Naive thymus-derived CD4-positive, alpha-beta T cell (primary cell): ENCODE measurements at regions of chr6 and their contacts with region 1.

Region 1: GRCh38 chr6:24720604-24721460 is 1.9 kb upstream of the C6orf62 start:
- DNase-seq: peak; percentile 97 to 100 (median 100)
- ATAC-seq: peak; percentile 90
- H3K4me3 ChIP-seq: peak overlapping the region; percentile 89
- H3K4me3 Mint-ChIP-seq: peak overlapping the region; percentile 93 to 97 (median 96)
- H3K27ac ChIP-seq: peak overlapping the region; percentile 99
- H3K27ac Mint-ChIP-seq: peak overlapping the region; percentile 95 to 100 (median 99)
- H3K4me1 ChIP-seq: peaks cover 35 to 36% of the 10 kb centered on the region in 2 donors
- H3K4me1 Mint-ChIP-seq: peaks cover 27 to 52% (median 47%) of the 10 kb centered on the region in 7 donors
- H3K27me3 ChIP-seq: no peaks in the 10 kb centered on the region
- H3K27me3 Mint-ChIP-seq: peaks cover 0 to 2% (median 0%) of the 10 kb centered on the region in 5 donors

Region 2: GRCh38 chr6:24666641-24667377 is 54.0 kb before region 1 on chr6 and contains the starts of genes ACOT13 and TDP2:
- CTCF ChIA-PET with region 1: no interaction called
- POLR2A ChIA-PET with region 1: interaction called, 39 read pairs
- intact Hi-C with region 1: loop called (anchors 1 kb)
- DNase-seq: peak; percentile 93 to 97 (median 96)
- ATAC-seq: peak; percentile 97
- H3K4me3 ChIP-seq: peak within 1 kb of the TSS; percentile 91
- H3K4me3 Mint-ChIP-seq: peak within 1 kb of the TSS; percentile 93 to 100 (median 98)
- H3K27ac ChIP-seq: peak within 1 kb of the TSS; percentile 88
- H3K27ac Mint-ChIP-seq: peak within 1 kb of the TSS; percentile 91 to 99 (median 98)
- H3K4me1 ChIP-seq: peaks cover 19 to 27% of the 10 kb centered on the region in 2 donors
- H3K4me1 Mint-ChIP-seq: peaks cover 28 to 70% (median 68%) of the 10 kb centered on the region in 7 donors
- H3K27me3 ChIP-seq: no peaks in the 10 kb centered on the region
- H3K27me3 Mint-ChIP-seq: no peaks in the 10 kb centered on the region
- total RNA-seq, gene ACOT13: 4.0 to 20.0 (median 12.5) TPM
- total RNA-seq, gene TDP2: 38.6 to 69.7 (median 48.2) TPM

Region 3: GRCh38 chr6:24743265-24743943 is 22.6 kb after region 1 on chr6:
- CTCF ChIA-PET with region 1: interaction called, 4 read pairs
- POLR2A ChIA-PET with region 1: interaction called, 15 read pairs
- intact Hi-C with region 1: loop called in 1 of 2 experiments (anchors 1 kb)
- DNase-seq: peak in 1 of 9 donors; percentile 25
- ATAC-seq: peak; percentile 83
- H3K4me3 ChIP-seq: no peak overlapping the region
- H3K4me3 Mint-ChIP-seq: peak overlapping the region in 1 of 10 donors; percentile 2
- H3K27ac ChIP-seq: no peak overlapping the region
- H3K27ac Mint-ChIP-seq: peak overlapping the region in 1 of 9 donors; percentile 56
- H3K4me1 ChIP-seq: no peaks in the 10 kb centered on the region
- H3K4me1 Mint-ChIP-seq: peaks cover 0 to 16% (median 0%) of the 10 kb centered on the region in 7 donors
- H3K27me3 ChIP-seq: no peaks in the 10 kb centered on the region
- H3K27me3 Mint-ChIP-seq: no peaks in the 10 kb centered on the region

Region 4: GRCh38 chr6:24855395-24856245 is 134.8 kb after region 1 on chr6:
- CTCF ChIA-PET with region 1: no interaction called
- POLR2A ChIA-PET with region 1: interaction called, 3 read pairs
- intact Hi-C with region 1: loop called in 1 of 2 experiments (anchors 5 kb)
- DNase-seq: peak; percentile 25 to 83 (median 74)
- ATAC-seq: peak; percentile 78
- H3K4me3 ChIP-seq: no peak overlapping the region
- H3K4me3 Mint-ChIP-seq: peak overlapping the region in 8 of 10 donors; percentile 48 to 89 (median 62)
- H3K27ac ChIP-seq: peak overlapping the region; percentile 72
- H3K27ac Mint-ChIP-seq: peak overlapping the region; percentile 86 to 99 (median 94)
- H3K4me1 ChIP-seq: peaks cover 47 to 59% of the 10 kb centered on the region in 2 donors
- H3K4me1 Mint-ChIP-seq: peaks cover 51 to 72% (median 66%) of the 10 kb centered on the region in 7 donors
- H3K27me3 ChIP-seq: no peaks in the 10 kb centered on the region
- H3K27me3 Mint-ChIP-seq: no peaks in the 10 kb centered on the region

Region 5: DNA sequence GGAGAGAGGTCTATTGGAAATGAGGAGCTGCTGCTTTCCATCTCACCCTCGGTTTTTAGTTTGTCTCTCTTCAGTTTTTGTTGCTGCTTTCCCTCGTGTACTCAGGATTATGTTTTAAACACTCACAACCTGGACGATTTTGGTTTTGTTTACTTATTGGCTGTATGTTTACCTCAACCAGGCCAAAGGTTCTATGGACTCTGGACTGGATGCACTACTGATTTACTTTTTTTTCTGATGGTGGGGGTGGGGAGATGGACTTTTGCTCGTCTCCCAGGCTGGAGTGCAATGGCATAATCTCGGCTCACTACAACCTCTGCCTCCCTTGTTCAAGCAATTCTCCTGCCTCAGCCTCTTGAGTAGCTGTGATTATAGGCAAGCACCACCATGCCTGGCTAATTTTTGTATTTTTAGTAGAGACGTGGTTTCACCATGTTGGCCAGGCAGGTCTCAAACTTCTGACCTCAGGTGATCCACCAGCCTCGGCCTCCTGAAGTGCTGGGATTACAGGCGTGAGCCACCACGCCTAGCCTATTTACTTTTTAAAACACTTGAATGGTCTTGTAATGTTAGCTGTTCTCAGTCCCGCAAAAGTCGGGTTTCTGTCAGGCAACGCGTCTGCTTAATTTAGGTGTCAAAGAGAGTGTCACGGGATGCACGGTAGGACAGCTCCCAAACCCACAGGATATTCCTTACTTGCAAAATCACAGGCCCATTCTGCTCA is 363.1 kb after region 1 on chr6:
- CTCF ChIA-PET with region 1: no interaction called
- POLR2A ChIA-PET with region 1: no interaction called
- intact Hi-C with region 1: no loop called
- DNase-seq: no peak
- ATAC-seq: no peak
- H3K4me3 ChIP-seq: no peak overlapping the region
- H3K4me3 Mint-ChIP-seq: no peak overlapping the region
- H3K27ac ChIP-seq: no peak overlapping the region
- H3K27ac Mint-ChIP-seq: peak overlapping the region in 4 of 9 donors; percentile 28 to 73 (median 55)
- H3K4me1 ChIP-seq: peaks cover 18 to 22% of the 10 kb centered on the region in 2 donors
- H3K4me1 Mint-ChIP-seq: peaks cover 5 to 15% (median 11%) of the 10 kb centered on the region in 7 donors
- H3K27me3 ChIP-seq: no peaks in the 10 kb centered on the region
- H3K27me3 Mint-ChIP-seq: no peaks in the 10 kb centered on the region

Region 6: GRCh38 chr6:25138237-25139125 is 417.6 kb after region 1 on chr6:
- CTCF ChIA-PET with region 1: no interaction called
- POLR2A ChIA-PET with region 1: interaction called, 8 read pairs
- intact Hi-C with region 1: loop called (anchors 1 to 2 kb)
- DNase-seq: peak; percentile 14 to 67 (median 60)
- ATAC-seq: peak; percentile 94
- H3K4me3 ChIP-seq: peak overlapping the region; percentile 61
- H3K4me3 Mint-ChIP-seq: peak overlapping the region; percentile 84 to 98 (median 92)
- H3K27ac ChIP-seq: peak overlapping the region; percentile 76
- H3K27ac Mint-ChIP-seq: peak overlapping the region; percentile 87 to 97 (median 96)
- H3K4me1 ChIP-seq: peaks cover 12 to 16% of the 10 kb centered on the region in 2 donors
- H3K4me1 Mint-ChIP-seq: peaks cover 22 to 45% (median 27%) of the 10 kb centered on the region in 7 donors
- H3K27me3 ChIP-seq: no peaks in the 10 kb centered on the region
- H3K27me3 Mint-ChIP-seq: no peaks in the 10 kb centered on the region

Region 7: GRCh38 chr6:25458485-25458884 is 737.7 kb after region 1 on chr6:
- CTCF ChIA-PET with region 1: no interaction called
- POLR2A ChIA-PET with region 1: no interaction called
- intact Hi-C with region 1: no loop called
- DNase-seq: no peak
- ATAC-seq: no peak
- H3K4me3 ChIP-seq: no peak overlapping the region
- H3K4me3 Mint-ChIP-seq: no peak overlapping the region
- H3K27ac ChIP-seq: no peak overlapping the region
- H3K27ac Mint-ChIP-seq: no peak overlapping the region
- H3K4me1 ChIP-seq: no peaks in the 10 kb centered on the region
- H3K4me1 Mint-ChIP-seq: peaks cover 0 to 4% (median 0%) of the 10 kb centered on the region in 7 donors
- H3K27me3 ChIP-seq: no peaks in the 10 kb centered on the region
- H3K27me3 Mint-ChIP-seq: no peaks in the 10 kb centered on the region